ENCODE measurements at regions of chr15 and their contacts with region 1.

Region 1: GRCh38 chr15:63610200-63610841 is 13.1 kb downstream of the FBXL22 start:
- DNase-seq: peak; percentile 90
- ATAC-seq: peak; percentile 91
- H3K4me3 Mint-ChIP-seq: peak overlapping the region; percentile 12
- H3K27ac Mint-ChIP-seq: peak overlapping the region; percentile 94
- H3K4me1 Mint-ChIP-seq: peaks cover 46% of the 10 kb centered on the region
- H3K27me3 Mint-ChIP-seq: no peaks in the 10 kb centered on the region

Region 2: GRCh38 chr15:63466378-63467192 is 143.7 kb before region 1 on chr15:
- CTCF ChIA-PET with region 1: interaction called, 16 read pairs
- POLR2A ChIA-PET with region 1: interaction called, 3 read pairs
- DNase-seq: peak; percentile 77
- ATAC-seq: peak; percentile 93
- H3K4me3 Mint-ChIP-seq: no peak overlapping the region
- H3K27ac Mint-ChIP-seq: no peak overlapping the region
- H3K4me1 Mint-ChIP-seq: peaks cover 9% of the 10 kb centered on the region
- H3K27me3 Mint-ChIP-seq: peaks cover 5% of the 10 kb centered on the region

Region 3: DNA sequence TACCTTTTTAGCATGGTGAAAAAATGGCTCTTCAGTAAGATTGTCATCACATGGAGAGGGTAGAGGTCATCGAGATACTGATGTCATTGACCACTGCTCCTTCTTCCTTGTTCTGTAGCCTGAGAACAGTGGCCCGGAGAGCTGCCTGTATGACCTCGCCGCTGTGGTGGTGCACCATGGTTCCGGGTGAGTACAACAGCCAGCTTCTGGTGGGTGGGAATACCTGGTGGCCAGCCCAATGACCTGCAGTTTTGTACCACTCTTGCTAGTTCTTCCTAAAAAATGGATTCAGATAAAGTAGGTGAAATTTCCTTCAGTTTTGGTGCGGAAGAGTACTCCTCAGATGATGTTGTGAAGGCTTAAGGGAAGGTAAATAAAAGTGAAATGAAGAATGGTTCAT is 21.5 kb before region 1 on chr15:
- CTCF ChIA-PET with region 1: no interaction called
- POLR2A ChIA-PET with region 1: no interaction called
- DNase-seq: no peak
- ATAC-seq: no peak
- H3K4me3 Mint-ChIP-seq: no peak overlapping the region
- H3K27ac Mint-ChIP-seq: no peak overlapping the region
- H3K4me1 Mint-ChIP-seq: peaks cover 26% of the 10 kb centered on the region
- H3K27me3 Mint-ChIP-seq: no peaks in the 10 kb centered on the region

Region 4: DNA sequence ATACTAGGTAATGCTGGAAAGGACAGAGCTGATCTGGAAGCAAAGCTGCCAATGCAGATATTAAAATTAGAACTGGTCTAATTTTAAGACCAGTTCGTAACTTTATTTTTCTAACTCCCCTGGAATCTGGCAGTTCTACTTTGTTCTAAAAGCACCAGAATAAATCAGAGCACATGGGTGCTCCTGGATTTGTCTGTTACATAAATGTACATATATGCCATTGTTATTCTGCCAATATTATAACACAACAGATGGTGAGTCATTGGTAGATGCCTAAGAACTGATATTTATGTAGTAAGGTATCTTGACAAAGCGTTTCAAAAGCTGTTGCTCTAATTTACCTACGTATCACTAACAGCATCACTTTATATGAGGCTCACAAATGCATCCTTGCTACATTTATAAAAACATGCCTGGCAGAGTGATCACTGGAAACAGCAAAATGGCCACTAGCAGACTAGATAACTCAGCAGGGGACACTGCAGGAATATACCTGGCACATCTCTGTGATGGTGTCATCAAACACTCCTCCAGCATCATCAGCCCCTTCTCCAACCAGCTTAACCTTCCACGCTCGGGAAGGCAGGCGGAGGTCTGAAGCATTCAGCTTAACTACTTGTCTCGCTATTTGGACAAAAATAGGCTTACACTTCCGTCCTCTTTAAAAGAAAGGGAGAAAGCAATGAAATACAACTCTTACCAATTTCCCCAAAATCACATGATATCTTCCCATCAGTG is 13.1 kb after region 1 on chr15:
- CTCF ChIA-PET with region 1: interaction called, 22 read pairs
- POLR2A ChIA-PET with region 1: no interaction called
- DNase-seq: no peak
- ATAC-seq: no peak
- H3K4me3 Mint-ChIP-seq: no peak overlapping the region
- H3K27ac Mint-ChIP-seq: no peak overlapping the region
- H3K4me1 Mint-ChIP-seq: peaks cover 6% of the 10 kb centered on the region
- H3K27me3 Mint-ChIP-seq: no peaks in the 10 kb centered on the region

Region 5: GRCh38 chr15:63683343-63683951 is 73.1 kb after region 1 on chr15:
- CTCF ChIA-PET with region 1: interaction called, 11 read pairs
- POLR2A ChIA-PET with region 1: no interaction called
- DNase-seq: no peak
- ATAC-seq: no peak
- H3K4me3 Mint-ChIP-seq: no peak overlapping the region
- H3K27ac Mint-ChIP-seq: no peak overlapping the region
- H3K4me1 Mint-ChIP-seq: no peaks in the 10 kb centered on the region
- H3K27me3 Mint-ChIP-seq: no peaks in the 10 kb centered on the region

Region 6: GRCh38 chr15:63891079-63891767 is 280.9 kb after region 1 on chr15:
- CTCF ChIA-PET with region 1: interaction called, 26 read pairs
- POLR2A ChIA-PET with region 1: no interaction called
- DNase-seq: peak; percentile 80
- ATAC-seq: peak; percentile 28
- H3K4me3 Mint-ChIP-seq: peak overlapping the region; percentile 25
- H3K27ac Mint-ChIP-seq: peak overlapping the region; percentile 86
- H3K4me1 Mint-ChIP-seq: peaks cover 65% of the 10 kb centered on the region
- H3K27me3 Mint-ChIP-seq: no peaks in the 10 kb centered on the region

Region 7: GRCh38 chr15:64046347-64047153 is 436.2 kb after region 1 on chr15 and contains the start of gene DAPK2:
- CTCF ChIA-PET with region 1: interaction called, 35 read pairs
- POLR2A ChIA-PET with region 1: no interaction called
- DNase-seq: peak; percentile 62
- ATAC-seq: peak; percentile 95
- H3K4me3 Mint-ChIP-seq: peak within 1 kb of the TSS; percentile 70
- H3K27ac Mint-ChIP-seq: peak within 1 kb of the TSS; percentile 31
- H3K4me1 Mint-ChIP-seq: peaks cover 13% of the 10 kb centered on the region
- H3K27me3 Mint-ChIP-seq: peaks cover 34% of the 10 kb centered on the region
- total RNA-seq, gene DAPK2: 1.3 to 1.5 TPM

Region 8: DNA sequence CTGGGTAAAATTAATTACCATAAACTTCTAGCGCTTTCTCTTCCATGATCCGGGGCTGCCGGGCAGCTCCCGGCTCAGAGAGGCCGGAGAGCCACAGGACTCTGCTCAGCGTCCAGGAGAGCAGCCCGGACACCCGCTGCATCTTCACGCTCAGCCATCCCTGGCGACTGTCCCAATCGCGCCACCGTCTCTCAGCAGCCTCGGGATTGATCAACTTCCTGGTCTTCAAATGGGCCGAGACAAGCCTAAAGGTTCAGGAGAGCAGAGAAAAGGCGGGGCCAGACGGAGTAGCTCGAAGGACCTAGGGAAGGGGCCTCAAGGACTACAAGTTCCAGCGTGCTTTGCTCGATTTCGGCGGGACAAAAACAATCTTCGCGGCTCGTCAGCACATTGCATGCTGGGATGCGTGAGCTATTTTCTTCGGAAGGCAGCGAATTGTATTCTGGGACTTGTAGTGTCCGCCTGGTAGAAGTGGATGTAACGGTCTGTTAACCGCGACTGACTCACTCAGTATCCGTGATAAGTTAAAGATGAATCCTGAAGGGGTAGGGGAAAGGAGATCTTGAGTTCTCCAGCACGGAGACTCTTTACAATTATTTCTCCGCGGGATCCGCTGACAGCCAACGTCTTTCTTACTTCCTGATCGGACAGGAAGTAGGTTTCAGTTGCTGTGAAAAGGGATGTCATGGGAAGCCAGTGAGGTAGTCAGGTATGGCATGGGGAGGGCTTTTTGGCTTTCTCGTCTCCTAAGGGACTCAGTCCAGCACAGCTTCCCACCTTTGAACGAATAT is 483.5 kb after region 1 on chr15 and contains the start of gene CIAO2A:
- CTCF ChIA-PET with region 1: interaction called, 12 read pairs
- POLR2A ChIA-PET with region 1: interaction called, 6 read pairs
- DNase-seq: peak; percentile 98
- ATAC-seq: peak; percentile 76
- H3K4me3 Mint-ChIP-seq: peak within 1 kb of the TSS; percentile 99
- H3K27ac Mint-ChIP-seq: peak within 1 kb of the TSS; percentile 100
- H3K4me1 Mint-ChIP-seq: peaks cover 74% of the 10 kb centered on the region
- H3K27me3 Mint-ChIP-seq: no peaks in the 10 kb centered on the region
- total RNA-seq, gene CIAO2A: 78.7 to 80.9 TPM

Measured in activated CD8-positive, alpha-beta T cell treated with anti-CD3 and anti-CD28 coated beads, Interleukin-2, amount 10 ng/mL, durations not matched to agents 7 days and 5 days (primary cell).